ENCODE measurements at regions of chr14 and their contacts with region 1.

Region 1: GRCh38 chr14:52473557-52473956 is 78.7 kb downstream of the TXNDC16 start:
- DNase-seq: peak; percentile 31
- CTCF ChIP-seq: peak; percentile 34

Region 2: GRCh38 chr14:52286661-52287649 is 186.6 kb before region 1 on chr14:
- in situ Hi-C with region 1: loop called (anchors 10 kb)
- DNase-seq: no peak
- CTCF ChIP-seq: no peak